A673 (cell line): ENCODE measurements at regions of chr15 and their contacts with region 1.

Region 1: DNA sequence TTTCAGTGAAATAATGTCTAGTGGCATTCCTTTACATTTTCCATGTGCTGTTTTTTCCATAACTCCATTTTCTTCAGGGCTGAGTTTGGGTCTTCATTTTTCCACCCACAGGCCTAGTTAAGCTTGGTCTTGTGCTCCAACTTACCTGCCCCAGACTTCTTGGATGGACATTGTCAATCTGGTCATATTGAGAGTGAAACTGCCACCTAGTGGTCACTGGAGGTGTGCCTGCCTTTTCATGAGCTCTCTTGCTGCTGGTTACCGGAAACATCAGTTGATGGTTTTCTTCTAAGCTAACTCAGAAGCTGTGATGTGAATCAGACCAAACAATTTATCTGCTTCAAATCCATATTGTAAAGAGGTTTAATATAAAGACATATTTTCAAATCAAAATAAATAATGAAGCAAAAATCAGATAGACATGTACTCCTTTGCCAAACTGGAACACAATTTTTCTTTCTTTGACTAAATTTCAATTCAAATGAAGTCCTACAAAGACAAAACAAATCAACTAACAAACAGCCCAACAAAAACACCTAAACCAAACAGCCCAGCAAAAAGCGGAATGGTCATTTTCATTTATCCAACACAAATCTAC is 135.1 kb upstream of the RASGRP1 start:
- DNase-seq: peak; percentile 60
- H3K4me3 ChIP-seq: no peak overlapping the region
- H3K27ac ChIP-seq: no peak overlapping the region
- H3K4me1 ChIP-seq: no peaks in the 10 kb centered on the region
- H3K27me3 ChIP-seq: peaks cover 9% of the 10 kb centered on the region
- CTCF ChIP-seq: peak; percentile 91

Region 2: GRCh38 chr15:38440353-38441129 is 259.2 kb before region 1 on chr15:
- CTCF ChIA-PET with region 1: interaction called, 25 read pairs
- POLR2A ChIA-PET with region 1: no interaction called
- intact Hi-C with region 1: loop called (anchors 1 kb)
- DNase-seq: peak; percentile 63
- H3K4me3 ChIP-seq: no peak overlapping the region
- H3K27ac ChIP-seq: no peak overlapping the region
- H3K4me1 ChIP-seq: no peaks in the 10 kb centered on the region
- H3K27me3 ChIP-seq: peaks cover 24% of the 10 kb centered on the region
- CTCF ChIP-seq: peak; percentile 97

Region 3: DNA sequence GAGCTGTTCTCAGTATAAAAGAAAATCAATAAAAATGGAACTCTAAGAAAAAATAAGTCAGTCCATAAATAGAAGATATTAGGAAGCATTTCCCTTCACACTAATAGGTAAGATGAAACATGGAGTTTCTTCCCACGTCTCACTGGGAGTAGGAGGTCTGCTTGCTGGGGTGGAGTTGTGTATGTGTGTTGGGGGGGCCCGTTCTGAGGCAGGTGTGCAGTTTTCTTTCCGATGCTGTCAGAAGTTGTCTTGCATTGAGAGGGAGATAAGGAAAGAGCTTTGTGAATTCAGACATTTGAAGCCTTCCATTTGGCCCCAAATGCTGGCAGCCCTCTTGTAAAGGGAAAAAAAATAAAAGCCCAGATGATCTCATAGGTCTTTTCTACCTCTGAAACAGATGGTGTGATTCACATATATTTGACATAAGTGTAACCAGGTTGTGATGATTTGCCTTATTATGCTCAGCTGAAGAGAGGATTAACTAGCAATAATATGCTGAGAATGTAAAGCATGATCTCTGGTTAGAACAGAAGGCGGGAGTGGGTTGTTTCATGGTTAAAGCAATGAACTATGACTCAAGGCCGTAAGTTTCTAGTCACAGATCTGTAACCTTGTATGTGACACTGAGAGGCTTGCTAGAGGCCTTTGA is 143.9 kb before region 1 on chr15:
- CTCF ChIA-PET with region 1: no interaction called
- POLR2A ChIA-PET with region 1: no interaction called
- intact Hi-C with region 1: loop called (anchors 5 kb)
- DNase-seq: no peak
- H3K4me3 ChIP-seq: no peak overlapping the region
- H3K27ac ChIP-seq: no peak overlapping the region
- H3K4me1 ChIP-seq: no peaks in the 10 kb centered on the region
- H3K27me3 ChIP-seq: peaks cover 31% of the 10 kb centered on the region
- CTCF ChIP-seq: no peak

Region 4: GRCh38 chr15:38667890-38668832 is 31.6 kb before region 1 on chr15:
- CTCF ChIA-PET with region 1: interaction called, 10 read pairs
- POLR2A ChIA-PET with region 1: no interaction called
- intact Hi-C with region 1: no loop called
- DNase-seq: peak; percentile 13
- H3K4me3 ChIP-seq: no peak overlapping the region
- H3K27ac ChIP-seq: no peak overlapping the region
- H3K4me1 ChIP-seq: peaks cover 28% of the 10 kb centered on the region
- H3K27me3 ChIP-seq: peaks cover 59% of the 10 kb centered on the region
- CTCF ChIP-seq: no peak